Posterior vena cava (tissue), 2 donors: ENCODE measurements at regions of chr6 and their contacts with region 1.

Region 1: GRCh38 chr6:113600551-113601344 is 256.4 kb upstream of the MARCKS start:
- DNase-seq: no peak

Region 2: GRCh38 chr6:112946051-112946450 is 654.7 kb before region 1 on chr6:
- intact Hi-C with region 1: loop called in 1 of 2 experiments (anchors 5 kb)
- DNase-seq: no peak